ENCODE measurements at regions of chr5 and their contacts with region 1.

Region 1: DNA sequence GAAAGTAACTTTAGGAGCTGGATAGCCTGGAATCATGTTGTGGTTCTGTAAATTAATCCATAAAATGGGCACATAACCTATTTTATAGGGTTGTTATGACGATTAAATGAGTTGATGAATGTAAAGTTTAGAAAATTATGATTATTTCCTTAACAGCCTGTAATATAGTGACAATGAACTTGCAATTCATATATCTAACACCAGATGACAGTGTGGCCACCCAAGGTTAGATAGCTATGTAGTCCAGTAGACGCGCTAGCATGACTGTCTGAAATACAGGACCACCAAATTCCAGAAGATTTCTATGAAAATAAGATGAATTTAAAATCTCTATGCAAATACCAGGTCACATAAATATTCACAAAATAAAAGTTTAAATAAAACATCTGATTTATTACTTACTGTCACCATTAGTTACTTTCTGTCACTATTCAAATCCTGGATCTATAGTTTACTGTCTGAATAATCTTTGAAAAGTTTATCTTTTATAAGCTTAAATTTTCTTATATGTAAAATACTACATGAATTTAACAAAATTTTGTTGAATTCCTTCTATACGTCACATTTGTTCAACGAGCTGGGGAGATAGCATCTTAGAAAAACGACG is 26.1 kb upstream of the MACIR start:
- DNase-seq: no peak
- H3K4me3 ChIP-seq: no peak overlapping the region
- H3K27ac ChIP-seq: no peak overlapping the region
- H3K27me3 ChIP-seq: no peaks in the 10 kb centered on the region
- CTCF ChIP-seq: peak; percentile 93

Region 2: GRCh38 chr5:103098993-103099392 is 133.5 kb before region 1 on chr5:
- CTCF ChIA-PET with region 1: no interaction called
- POLR2A ChIA-PET with region 1: no interaction called
- DNase-seq: no peak
- H3K4me3 ChIP-seq: no peak overlapping the region
- H3K27ac ChIP-seq: no peak overlapping the region
- H3K27me3 ChIP-seq: no peaks in the 10 kb centered on the region
- CTCF ChIP-seq: no peak

Region 3: DNA sequence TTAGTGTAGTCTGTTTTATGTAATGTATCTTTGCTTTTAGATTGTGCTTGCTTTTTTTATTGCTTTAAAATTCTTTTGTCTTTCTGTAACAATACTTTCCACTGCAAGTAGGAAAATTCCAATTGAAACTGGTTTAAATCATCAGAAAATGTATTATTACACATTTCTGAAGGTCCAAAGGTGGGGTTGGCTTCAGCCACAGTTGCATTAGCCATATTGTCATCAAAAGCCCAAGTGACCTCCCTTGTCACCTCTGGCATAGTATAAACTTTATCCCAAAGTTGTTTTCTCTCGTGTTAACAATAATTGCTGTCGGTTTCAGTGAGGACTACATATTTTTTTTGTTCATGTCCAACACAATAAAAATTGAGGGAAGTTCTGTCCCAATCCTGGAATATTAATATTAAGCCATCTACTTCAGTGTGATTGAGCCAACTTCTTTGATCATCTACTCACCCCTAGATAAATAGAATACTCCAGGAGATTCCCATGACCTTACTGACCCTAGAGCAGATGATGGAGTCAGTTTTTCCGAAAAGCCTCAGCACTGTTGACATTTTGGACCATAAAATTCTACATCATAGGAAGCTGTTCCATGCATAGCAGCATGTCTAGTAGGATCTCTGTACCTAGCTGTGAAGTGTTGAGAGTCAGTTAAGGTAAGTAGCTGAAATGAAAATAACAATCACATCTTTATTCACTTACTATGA is 26.4 kb before region 1 on chr5:
- CTCF ChIA-PET with region 1: no interaction called
- POLR2A ChIA-PET with region 1: no interaction called
- DNase-seq: no peak
- H3K4me3 ChIP-seq: no peak overlapping the region
- H3K27ac ChIP-seq: no peak overlapping the region
- H3K27me3 ChIP-seq: no peaks in the 10 kb centered on the region
- CTCF ChIP-seq: no peak

Region 4: DNA sequence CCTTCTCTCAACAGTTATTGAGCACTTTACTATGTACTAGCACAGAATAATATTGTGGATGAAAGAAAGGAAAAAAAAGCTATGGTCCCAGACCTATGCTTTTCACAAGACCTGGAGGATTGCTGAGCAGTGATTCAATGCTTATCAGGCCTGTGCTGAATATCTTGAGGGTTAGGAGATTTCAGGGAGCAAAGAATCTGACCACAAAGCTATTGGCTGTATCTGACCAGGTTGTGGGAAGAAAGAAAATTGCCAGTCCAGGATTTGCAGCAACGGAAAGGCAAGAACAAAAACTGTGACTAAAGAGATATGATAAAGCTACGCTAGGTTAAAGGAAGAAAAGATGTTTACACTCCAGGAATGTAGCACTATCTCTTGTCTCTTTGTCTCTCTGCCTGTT is 11.2 kb after region 1 on chr5:
- CTCF ChIA-PET with region 1: interaction called, 19 read pairs
- POLR2A ChIA-PET with region 1: no interaction called
- DNase-seq: no peak
- H3K4me3 ChIP-seq: no peak overlapping the region
- H3K27ac ChIP-seq: no peak overlapping the region
- H3K27me3 ChIP-seq: no peaks in the 10 kb centered on the region
- CTCF ChIP-seq: no peak

Region 5: DNA sequence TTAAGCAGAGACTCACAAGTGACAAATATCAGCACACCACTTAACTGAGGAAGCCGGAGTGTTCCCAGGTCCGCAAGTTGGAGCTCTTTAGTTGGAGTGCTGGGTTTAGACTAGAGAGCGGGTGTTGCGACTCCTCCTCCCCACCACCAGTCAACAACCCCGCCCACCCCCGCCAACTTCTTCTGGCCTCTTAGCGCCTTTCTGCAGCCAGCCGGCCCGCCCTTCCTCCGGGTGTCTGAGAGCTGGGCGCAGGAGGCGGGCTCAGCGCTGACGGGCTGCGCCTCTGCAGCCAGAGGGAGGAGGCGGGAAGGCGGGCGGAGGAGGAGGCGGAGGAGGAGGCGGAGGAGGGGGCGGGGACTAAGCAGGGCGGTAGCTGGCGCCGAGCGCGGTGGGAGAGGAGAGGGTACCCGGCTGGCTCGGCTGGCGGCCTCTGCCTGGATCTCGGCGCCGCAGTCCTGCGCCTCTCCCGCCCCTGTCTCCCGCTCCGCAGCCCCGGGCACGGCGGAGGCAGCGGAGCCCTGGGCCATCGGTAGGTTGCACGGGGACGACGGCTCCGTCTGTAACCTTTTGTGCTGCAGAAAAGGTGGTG is 26.0 kb after region 1 on chr5 and contains the start of gene MACIR:
- CTCF ChIA-PET with region 1: interaction called, 15 read pairs
- POLR2A ChIA-PET with region 1: no interaction called
- DNase-seq: peak; percentile 94
- H3K4me3 ChIP-seq: peak within 1 kb of the TSS; percentile 89
- H3K27ac ChIP-seq: no peak within 1 kb of the TSS
- H3K27me3 ChIP-seq: no peaks in the 10 kb centered on the region
- CTCF ChIP-seq: no peak
- polyA plus RNA-seq, gene MACIR: 5.3 and 6.3 TPM in 2 replicates